GM10248 (cell line): ENCODE measurements at regions of chr19 and their contacts with region 1.

Region 1: DNA sequence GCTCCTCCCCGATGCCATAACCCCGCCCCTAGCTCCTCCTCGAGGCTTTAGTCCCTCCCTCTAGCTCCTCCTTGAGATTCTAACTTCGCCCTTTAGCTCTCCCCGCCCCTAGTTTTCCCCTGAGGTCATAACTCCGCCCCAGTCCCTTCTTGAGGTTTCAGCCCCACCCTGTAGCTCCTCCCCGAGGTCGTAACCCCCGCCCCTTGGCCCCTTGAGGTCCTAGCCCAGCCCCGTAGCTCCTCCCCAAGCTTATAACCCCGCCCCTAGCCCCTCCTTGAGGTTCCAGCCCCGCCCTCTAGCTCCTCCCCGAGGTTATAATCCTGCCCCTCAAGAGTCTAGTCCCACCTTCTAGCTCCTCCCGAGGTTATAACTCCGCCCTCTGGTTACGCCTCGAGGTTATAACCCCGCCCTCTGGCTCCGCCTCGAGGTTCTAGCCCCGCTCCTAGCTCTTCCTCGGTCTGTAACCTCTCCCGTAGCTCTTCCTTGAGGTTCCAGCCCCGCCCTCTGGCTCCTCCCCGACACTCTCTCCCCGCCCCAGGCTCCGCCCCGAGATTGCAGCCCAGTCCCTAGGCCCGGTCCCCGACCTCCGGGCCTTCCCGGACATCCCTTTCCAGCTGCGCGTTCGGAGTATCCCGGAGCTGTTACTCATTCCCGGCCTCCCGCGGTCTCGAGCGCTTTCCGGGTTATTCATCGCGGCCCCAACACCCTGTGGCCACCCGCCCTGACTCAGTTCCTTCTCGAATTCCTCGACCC is 1.4 kb downstream of the PLAUR start:
- DNase-seq: peak; percentile 98
- CTCF ChIP-seq: no peak

Region 2: GRCh38 chr19:43678512-43679261 is 10.1 kb after region 1 on chr19:
- CTCF ChIA-PET with region 1: interaction called, 20 read pairs
- POLR2A ChIA-PET with region 1: interaction called, 3 read pairs
- DNase-seq: no peak
- CTCF ChIP-seq: no peak

Region 3: DNA sequence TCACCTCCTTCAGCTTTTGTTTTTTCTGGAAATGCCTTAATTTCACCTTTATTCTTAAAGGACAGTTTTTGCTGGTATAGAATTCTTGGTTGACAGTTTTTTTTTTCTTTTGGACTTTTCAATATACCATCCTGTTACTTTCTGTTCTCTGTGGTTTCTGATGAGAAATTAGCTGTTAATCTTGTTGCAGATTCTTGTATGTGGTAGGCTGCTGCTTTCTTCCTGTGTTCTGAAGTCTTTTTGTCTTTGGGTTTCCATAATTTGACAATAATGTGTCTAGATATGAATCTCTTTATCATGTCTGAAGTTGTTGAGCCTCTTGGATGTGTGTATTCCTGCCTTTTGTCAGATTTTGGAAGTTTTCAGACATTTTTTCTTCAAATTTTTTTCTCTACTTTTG is 170.6 kb after region 1 on chr19:
- CTCF ChIA-PET with region 1: no interaction called
- POLR2A ChIA-PET with region 1: no interaction called
- DNase-seq: no peak
- CTCF ChIP-seq: no peak